ENCODE measurements at regions of chrX and their contacts with region 1.

Region 1: GRCh38 chrX:40097497-40098263 is at the start of gene BCOR:
- DNase-seq: peak; percentile 77 to 86 (median 82)
- ATAC-seq: peak in 3 of 4 donors; percentile 28 to 66 (median 59)
- H3K4me3 ChIP-seq: peak within 1 kb of the TSS; percentile 63 to 98 (median 78)
- H3K27ac ChIP-seq: peak within 1 kb of the TSS; percentile 84 to 97 (median 90)
- H3K4me1 ChIP-seq: peaks cover 0 to 63% (median 9%) of the 10 kb centered on the region in 12 donors
- H3K27me3 ChIP-seq: peaks cover 0 to 92% (median 0%) of the 10 kb centered on the region in 9 donors
- CTCF ChIP-seq: no peak
- POLR2A ChIP-seq: peak in 1 of 2 donors; percentile 83
- total RNA-seq, gene BCOR: 11.3 to 40.1 (median 19.5) TPM

Region 2: DNA sequence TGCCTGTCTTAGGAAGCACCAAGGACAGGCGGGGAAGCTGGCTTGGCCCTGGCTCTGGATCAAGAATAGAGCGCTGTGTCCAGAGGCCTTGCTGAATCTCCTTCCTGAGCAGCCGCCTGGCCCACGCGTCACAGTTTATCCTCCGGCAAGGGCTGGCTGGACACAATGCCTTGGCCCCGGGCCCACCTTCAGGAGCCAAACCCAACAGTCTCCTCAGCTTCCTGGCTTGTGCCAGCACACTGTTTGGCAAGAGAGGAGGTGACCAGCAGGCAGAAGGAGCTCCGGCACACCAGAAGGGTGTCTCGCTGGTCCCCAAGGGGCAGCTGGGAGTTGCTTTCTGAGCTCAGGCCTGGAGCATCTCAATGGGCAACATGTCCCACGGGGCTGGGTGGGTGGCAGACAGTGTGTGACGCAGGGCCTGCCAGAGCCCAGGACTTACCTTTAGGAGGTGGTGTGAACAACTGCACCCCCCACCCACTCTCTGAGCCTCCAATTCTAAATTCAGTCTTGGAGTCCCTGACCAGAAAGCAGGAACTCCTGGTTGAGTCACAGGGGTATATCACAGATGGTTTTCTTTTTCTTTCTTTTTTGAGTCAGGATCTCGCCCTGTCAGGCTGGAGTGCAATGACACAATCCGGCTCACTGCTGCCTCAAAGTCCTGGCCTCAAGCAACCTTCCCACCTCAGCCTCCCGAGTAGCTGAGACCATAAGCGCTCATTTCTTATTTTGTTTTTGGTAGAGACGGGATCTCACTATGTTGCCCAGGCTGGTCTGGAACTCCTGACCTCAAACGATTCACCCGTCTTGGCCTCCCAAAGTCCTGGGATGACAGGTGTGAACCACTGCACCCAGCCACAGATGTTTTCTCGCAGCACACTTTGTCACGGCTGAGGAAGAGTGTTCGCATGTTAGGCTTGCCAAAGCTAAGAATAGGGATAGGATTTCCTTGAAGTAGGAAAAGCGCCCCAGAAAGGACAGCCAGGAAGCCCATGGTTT is 361.2 kb before region 1 on chrX:
- intact Hi-C with region 1: loop called in 3 of 10 experiments (anchors 5 to 10 kb)
- DNase-seq: peak; percentile 84 to 95 (median 91)
- ATAC-seq: peak; percentile 83 to 97 (median 92)
- H3K4me3 ChIP-seq: no peak overlapping the region
- H3K27ac ChIP-seq: peak overlapping the region in 10 of 12 donors; percentile 7 to 70 (median 62)
- H3K4me1 ChIP-seq: peaks cover 0 to 21% (median 9%) of the 10 kb centered on the region in 12 donors
- H3K27me3 ChIP-seq: peaks cover 0 to 9% (median 0%) of the 10 kb centered on the region in 9 donors
- CTCF ChIP-seq: no peak
- POLR2A ChIP-seq: no peak

Region 3: GRCh38 chrX:39896951-39897740 is 200.5 kb before region 1 on chrX:
- intact Hi-C with region 1: loop called in 3 of 10 experiments (anchors 10 kb)
- DNase-seq: peak in 3 of 5 donors; percentile 35 to 62 (median 49)
- ATAC-seq: peak; percentile 21 to 78 (median 77)
- H3K4me3 ChIP-seq: no peak overlapping the region
- H3K27ac ChIP-seq: peak overlapping the region in 5 of 12 donors; percentile 19 to 50 (median 42)
- H3K4me1 ChIP-seq: peaks cover 0 to 38% (median 9%) of the 10 kb centered on the region in 12 donors
- H3K27me3 ChIP-seq: peaks cover 0 to 17% (median 0%) of the 10 kb centered on the region in 9 donors
- CTCF ChIP-seq: peak in 4 of 12 donors; percentile 5 to 25 (median 17)
- POLR2A ChIP-seq: no peak

Region 4: DNA sequence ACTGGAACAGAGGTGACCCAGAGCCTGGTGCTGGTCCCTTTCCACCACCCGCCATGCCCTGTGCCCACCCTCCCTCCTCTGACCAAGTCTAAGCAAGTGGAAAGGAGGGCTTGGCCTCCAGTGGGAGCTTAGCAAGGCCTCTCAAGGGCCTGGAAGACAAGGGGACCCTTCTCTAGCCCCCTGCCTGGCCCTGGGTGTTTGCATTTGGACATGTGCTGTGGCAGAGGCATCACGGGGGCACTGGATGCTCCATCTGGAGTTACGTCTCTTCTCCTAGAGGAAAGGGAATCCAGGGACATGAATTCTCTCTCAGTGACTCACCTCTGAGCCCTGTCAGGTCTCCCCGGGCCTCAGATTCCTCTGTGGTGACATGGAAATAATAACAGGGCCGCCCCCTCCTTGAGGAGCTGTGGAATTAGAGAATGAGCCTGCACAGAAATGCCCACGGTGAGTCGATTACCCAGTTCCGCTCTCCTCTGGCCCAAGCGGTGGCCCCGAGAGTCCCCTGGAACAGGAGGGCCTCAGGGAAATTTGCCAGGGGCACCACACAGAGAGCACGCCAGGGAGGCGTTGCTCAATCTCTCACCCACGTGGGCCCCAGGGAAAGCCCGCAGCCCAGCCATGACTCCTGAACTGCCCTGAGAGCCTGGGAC is 189.6 kb before region 1 on chrX:
- intact Hi-C with region 1: loop called in 2 of 10 experiments (anchors 10 kb)
- DNase-seq: peak; percentile 44 to 76 (median 72)
- ATAC-seq: peak; percentile 80 to 93 (median 88)
- H3K4me3 ChIP-seq: no peak overlapping the region
- H3K27ac ChIP-seq: peak overlapping the region in 9 of 12 donors; percentile 27 to 66 (median 38)
- H3K4me1 ChIP-seq: peaks cover 0 to 29% (median 5%) of the 10 kb centered on the region in 12 donors
- H3K27me3 ChIP-seq: peaks cover 0 to 23% (median 0%) of the 10 kb centered on the region in 9 donors
- CTCF ChIP-seq: no peak
- POLR2A ChIP-seq: no peak

Region 5: GRCh38 chrX:40040686-40041461 is 56.8 kb before region 1 on chrX:
- intact Hi-C with region 1: no loop called
- DNase-seq: no peak
- ATAC-seq: no peak
- H3K4me3 ChIP-seq: no peak overlapping the region
- H3K27ac ChIP-seq: no peak overlapping the region
- H3K4me1 ChIP-seq: peaks cover 0 to 9% (median 0%) of the 10 kb centered on the region in 12 donors
- H3K27me3 ChIP-seq: no peaks in the 10 kb centered on the region
- CTCF ChIP-seq: no peak
- POLR2A ChIP-seq: no peak

Region 6: GRCh38 chrX:40146262-40147125 is 48.8 kb after region 1 on chrX:
- intact Hi-C with region 1: loop called in 1 of 10 experiments (anchors 5 kb)
- DNase-seq: peak in 3 of 5 donors; percentile 26 to 56 (median 51)
- ATAC-seq: peak in 3 of 4 donors; percentile 12 to 49 (median 33)
- H3K4me3 ChIP-seq: peak overlapping the region; percentile 34 to 71 (median 56)
- H3K27ac ChIP-seq: peak overlapping the region in 8 of 12 donors; percentile 24 to 72 (median 58)
- H3K4me1 ChIP-seq: peaks cover 0 to 68% (median 23%) of the 10 kb centered on the region in 12 donors
- H3K27me3 ChIP-seq: peaks cover 0 to 82% (median 0%) of the 10 kb centered on the region in 9 donors
- CTCF ChIP-seq: no peak
- POLR2A ChIP-seq: no peak

Region 7: GRCh38 chrX:40153335-40154249 is 55.9 kb after region 1 on chrX:
- intact Hi-C with region 1: loop called in 5 of 10 experiments (anchors 5 kb)
- DNase-seq: peak in 4 of 5 donors; percentile 37 to 70 (median 62)
- ATAC-seq: peak in 3 of 4 donors; percentile 3 to 22 (median 21)
- H3K4me3 ChIP-seq: peak overlapping the region; percentile 21 to 63 (median 50)
- H3K27ac ChIP-seq: peak overlapping the region; percentile 65 to 89 (median 81)
- H3K4me1 ChIP-seq: peaks cover 0 to 78% (median 29%) of the 10 kb centered on the region in 12 donors
- H3K27me3 ChIP-seq: peaks cover 0 to 96% (median 0%) of the 10 kb centered on the region in 9 donors
- CTCF ChIP-seq: peak in 6 of 12 donors; percentile 9 to 37 (median 27)
- POLR2A ChIP-seq: no peak

Region 8: DNA sequence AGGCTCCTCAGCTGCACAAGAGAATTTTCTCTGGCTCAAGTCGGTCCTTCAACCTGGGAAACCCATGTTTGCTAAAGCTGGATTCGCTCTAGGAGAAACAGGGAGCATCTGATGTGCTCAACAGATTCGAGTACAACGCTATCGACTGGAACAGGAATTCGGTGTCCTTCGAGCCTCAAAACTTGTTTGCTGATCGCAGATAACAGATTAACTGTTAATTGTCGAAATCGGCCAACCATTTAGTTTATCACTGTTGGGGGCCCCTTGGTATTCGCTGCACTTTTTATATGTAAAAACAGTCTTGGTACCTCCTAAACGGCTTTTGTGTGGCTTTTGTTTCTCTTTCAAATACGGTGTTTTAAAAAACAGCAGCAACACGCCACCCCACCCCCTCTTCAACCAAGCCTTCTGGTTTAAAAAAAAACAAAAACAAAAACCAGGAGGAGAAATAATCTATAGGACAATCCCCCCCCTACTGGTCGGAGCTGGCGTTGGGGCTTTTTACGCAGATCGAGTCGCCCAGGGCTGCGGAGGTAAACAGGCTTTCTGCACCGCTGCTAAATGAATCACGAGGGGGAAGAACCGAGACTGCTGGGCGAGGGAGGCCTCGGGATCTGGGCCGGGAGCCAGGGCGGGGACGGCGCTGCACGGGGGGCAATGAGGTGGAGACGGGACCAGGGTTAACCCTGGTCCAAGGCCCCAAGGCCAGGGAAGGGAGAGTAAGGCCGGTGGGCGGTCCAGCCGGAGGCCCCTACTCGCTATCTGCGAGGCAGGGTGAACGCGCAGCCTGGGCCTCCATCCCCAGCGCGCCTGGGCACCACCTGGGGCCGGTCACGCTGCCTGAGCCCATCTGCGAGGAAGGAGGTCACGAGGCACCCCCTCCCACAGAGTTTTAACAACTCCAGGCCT is 71.8 kb after region 1 on chrX:
- intact Hi-C with region 1: loop called in 1 of 10 experiments (anchors 5 kb)
- DNase-seq: peak in 4 of 5 donors; percentile 34 to 75 (median 46)
- ATAC-seq: no peak
- H3K4me3 ChIP-seq: peak overlapping the region in 2 of 12 donors; percentile 19 to 43
- H3K27ac ChIP-seq: peak overlapping the region in 2 of 12 donors; percentile 74 to 76
- H3K4me1 ChIP-seq: peaks cover 0 to 56% (median 19%) of the 10 kb centered on the region in 12 donors
- H3K27me3 ChIP-seq: peaks cover 0 to 81% (median 0%) of the 10 kb centered on the region in 9 donors
- CTCF ChIP-seq: peak in 8 of 12 donors; percentile 15 to 35 (median 23)
- POLR2A ChIP-seq: no peak